Esophagus squamous epithelium (tissue), 5 donors: ENCODE measurements at regions of chr5 and their contacts with region 1.

Region 1: DNA sequence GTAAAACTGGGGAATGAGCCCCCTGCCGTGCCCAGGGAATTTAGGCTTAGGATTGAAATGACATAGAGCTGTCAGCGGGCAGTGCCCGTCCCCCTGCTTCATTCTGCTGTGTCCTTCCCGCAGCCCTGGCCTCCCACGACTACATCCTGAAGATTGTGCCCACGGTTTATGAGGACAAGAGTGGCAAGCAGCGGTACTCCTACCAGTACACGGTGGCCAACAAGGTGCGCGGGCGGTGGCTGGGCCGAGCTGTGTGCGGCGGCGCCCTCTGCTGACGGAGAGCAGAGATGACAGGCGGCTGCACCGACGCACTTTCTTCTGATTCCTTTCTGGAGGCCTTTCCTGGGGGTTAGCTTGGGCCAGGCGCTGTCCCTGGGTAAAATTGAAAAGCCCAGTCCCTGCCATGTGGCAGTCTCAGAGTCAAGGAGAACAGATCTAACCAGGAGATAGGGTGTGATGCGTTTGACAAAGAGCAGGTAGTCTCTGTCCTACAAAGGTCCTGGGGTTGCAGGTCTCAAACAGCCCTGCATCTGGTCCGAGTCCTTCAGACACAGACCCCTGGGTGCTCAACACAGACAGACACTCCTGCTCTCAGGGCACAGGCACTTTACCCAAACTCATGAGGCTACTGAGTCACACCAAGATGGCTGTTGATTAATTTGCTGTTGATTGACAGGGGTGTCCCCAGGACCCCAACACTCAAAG is 26.8 kb upstream of the RPL26L1 start:
- DNase-seq: no peak
- H3K4me3 ChIP-seq: no peak overlapping the region
- H3K27ac ChIP-seq: peak overlapping the region in 3 of 4 donors; percentile 33 to 66 (median 63)
- H3K4me1 ChIP-seq: peaks cover 4 to 21% (median 9%) of the 10 kb centered on the region in 3 donors
- H3K27me3 ChIP-seq: no peaks in the 10 kb centered on the region
- CTCF ChIP-seq: peak; percentile 94 to 98 (median 96)
- POLR2A ChIP-seq: no peak

Region 2: GRCh38 chr5:172714491-172715421 is 217.7 kb before region 1 on chr5:
- intact Hi-C with region 1: loop called (anchors 5 kb)
- DNase-seq: no peak
- H3K4me3 ChIP-seq: no peak overlapping the region
- H3K27ac ChIP-seq: peak overlapping the region; percentile 54 to 86 (median 78)
- H3K4me1 ChIP-seq: peaks cover 19 to 61% (median 33%) of the 10 kb centered on the region in 3 donors
- H3K27me3 ChIP-seq: peaks cover 0 to 4% (median 0%) of the 10 kb centered on the region in 4 donors
- CTCF ChIP-seq: peak; percentile 65 to 89 (median 86)
- POLR2A ChIP-seq: no peak